Dorsolateral prefrontal cortex (tissue), 120 donors: ENCODE measurements at regions of chr10 and their contacts with region 1.

Region 1: GRCh38 chr10:32346134-32346550 is 816 bp downstream of the EPC1 start:
- DNase-seq: peak; percentile 89 to 96 (median 94)
- H3K4me3 ChIP-seq: peak overlapping the region; percentile 67 to 99 (median 91)
- H3K27ac ChIP-seq: peak overlapping the region; percentile 100
- H3K27me3 ChIP-seq: no peaks in the 10 kb centered on the region
- CTCF ChIP-seq: peak; percentile 69 to 99 (median 95)

Region 2: DNA sequence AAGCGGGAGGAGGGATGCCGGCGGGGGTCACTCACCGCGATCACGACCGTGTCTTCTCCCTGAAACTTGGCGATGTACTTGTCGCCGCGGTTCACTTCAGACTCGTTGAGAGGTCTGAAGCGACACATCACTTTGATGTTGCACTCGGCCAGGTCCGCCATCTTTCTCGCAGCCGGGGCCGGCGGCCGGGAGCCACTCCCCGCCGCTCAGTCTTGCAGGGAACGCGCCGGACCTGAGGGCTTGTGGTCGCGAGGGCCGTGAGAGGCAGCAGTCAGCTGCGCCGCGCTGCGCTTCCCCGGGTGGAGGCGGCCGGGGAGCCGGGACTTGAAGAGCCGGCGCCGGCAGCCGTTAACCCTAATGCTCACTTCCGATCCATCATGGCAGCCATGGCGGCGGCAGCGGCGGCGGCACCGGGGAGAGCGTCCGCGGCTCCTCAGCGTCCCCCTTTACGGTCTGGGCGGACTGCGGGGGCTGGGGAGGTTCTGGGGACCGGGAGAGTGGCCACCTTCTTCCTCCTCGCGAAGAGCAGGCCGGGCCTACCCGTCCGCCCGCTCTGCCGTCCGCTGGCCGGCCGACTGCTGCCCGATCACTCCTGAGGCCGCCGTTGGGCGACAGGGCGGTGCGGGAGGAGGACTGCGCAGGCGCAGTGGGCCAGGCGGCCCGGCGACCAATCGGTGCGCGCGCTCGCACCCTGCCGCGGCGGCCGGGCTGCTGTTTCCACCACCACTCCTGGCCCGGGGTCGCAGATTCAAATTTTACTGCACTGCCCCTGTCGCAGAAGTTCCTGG is 290.1 kb before region 1 on chr10 and contains the start of gene KIF5B:
- intact Hi-C with region 1: loop called (anchors 2 to 5 kb)
- DNase-seq: peak; percentile 66 to 94 (median 84)
- H3K4me3 ChIP-seq: peak within 1 kb of the TSS; percentile 54 to 98 (median 89)
- H3K27ac ChIP-seq: peak within 1 kb of the TSS; percentile 81 to 100 (median 99)
- H3K27me3 ChIP-seq: no peaks in the 10 kb centered on the region
- CTCF ChIP-seq: peak in 26 of 56 donors; percentile 2 to 48 (median 22)
- total RNA-seq, gene KIF5B: 73.4 to 239 (median 109) TPM

Region 3: DNA sequence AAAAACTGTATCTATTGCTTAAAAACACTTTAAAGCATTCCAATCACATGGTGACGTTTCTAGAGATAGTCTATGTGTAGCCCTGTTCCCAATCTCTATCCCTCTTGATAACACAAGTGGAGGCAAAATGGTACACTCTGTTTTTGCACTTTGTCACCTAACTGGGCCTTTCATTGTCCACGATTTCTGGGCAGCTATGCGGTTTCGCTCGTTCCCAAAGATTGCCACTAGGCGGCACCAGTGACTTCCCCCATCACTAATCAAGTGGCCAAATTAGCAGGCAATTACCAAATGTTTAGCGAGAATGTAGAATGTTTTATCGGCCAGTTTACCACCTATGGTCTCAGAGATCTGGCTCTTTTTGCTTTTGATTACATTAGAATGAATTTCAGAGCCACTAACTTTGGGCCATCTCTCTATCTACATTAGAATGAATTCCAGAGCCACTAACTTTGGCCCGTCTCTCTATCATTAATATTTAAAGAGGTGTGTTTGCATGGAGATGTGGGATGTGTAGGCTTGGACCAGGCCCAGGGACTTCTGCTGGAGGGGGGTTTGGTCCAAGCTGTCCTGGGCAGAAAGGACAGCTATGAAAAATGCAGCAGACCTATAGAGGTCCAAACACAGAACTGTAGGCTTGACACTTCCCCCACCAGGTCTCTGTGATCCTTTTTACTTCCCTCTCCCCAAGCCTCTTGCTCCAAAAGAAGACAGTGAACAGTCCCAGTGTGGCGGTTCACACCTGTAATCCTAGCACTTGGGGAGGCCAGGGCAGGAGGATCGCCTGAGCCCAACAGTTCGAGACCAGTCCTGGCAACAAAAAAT is 89.3 kb before region 1 on chr10:
- intact Hi-C with region 1: loop called (anchors 1 to 2 kb)
- DNase-seq: peak in 8 of 10 donors; percentile 44 to 79 (median 66)
- H3K4me3 ChIP-seq: peak overlapping the region in 21 of 59 donors; percentile 11 to 47 (median 27)
- H3K27ac ChIP-seq: peak overlapping the region in 8 of 59 donors; percentile 11 to 66 (median 53)
- H3K27me3 ChIP-seq: no peaks in the 10 kb centered on the region
- CTCF ChIP-seq: peak; percentile 56 to 91 (median 82)

Region 4: GRCh38 chr10:32378363-32379317 is 32.5 kb after region 1 on chr10:
- intact Hi-C with region 1: loop called (anchors 1 to 2 kb)
- DNase-seq: peak; percentile 95 to 99 (median 98)
- H3K4me3 ChIP-seq: peak overlapping the region; percentile 50 to 94 (median 77)
- H3K27ac ChIP-seq: peak overlapping the region; percentile 6 to 98 (median 91)
- H3K27me3 ChIP-seq: no peaks in the 10 kb centered on the region
- CTCF ChIP-seq: peak in 37 of 56 donors; percentile 5 to 55 (median 23)

Region 5: GRCh38 chr10:32958085-32959005 is 612.2 kb after region 1 on chr10 and contains the start of gene ITGB1:
- intact Hi-C with region 1: loop called in 1 of 2 experiments (anchors 5 kb)
- DNase-seq: peak; percentile 85 to 97 (median 92)
- H3K4me3 ChIP-seq: peak within 1 kb of the TSS; percentile 71 to 98 (median 92)
- H3K27ac ChIP-seq: peak within 1 kb of the TSS; percentile 16 to 98 (median 91)
- H3K27me3 ChIP-seq: no peaks in the 10 kb centered on the region
- CTCF ChIP-seq: peak in 17 of 56 donors; percentile 6 to 43 (median 22)
- total RNA-seq, gene ITGB1: 45.5 to 146 (median 82.5) TPM